ENCODE measurements at regions of chr11 and their contacts with region 1.

Region 1: DNA sequence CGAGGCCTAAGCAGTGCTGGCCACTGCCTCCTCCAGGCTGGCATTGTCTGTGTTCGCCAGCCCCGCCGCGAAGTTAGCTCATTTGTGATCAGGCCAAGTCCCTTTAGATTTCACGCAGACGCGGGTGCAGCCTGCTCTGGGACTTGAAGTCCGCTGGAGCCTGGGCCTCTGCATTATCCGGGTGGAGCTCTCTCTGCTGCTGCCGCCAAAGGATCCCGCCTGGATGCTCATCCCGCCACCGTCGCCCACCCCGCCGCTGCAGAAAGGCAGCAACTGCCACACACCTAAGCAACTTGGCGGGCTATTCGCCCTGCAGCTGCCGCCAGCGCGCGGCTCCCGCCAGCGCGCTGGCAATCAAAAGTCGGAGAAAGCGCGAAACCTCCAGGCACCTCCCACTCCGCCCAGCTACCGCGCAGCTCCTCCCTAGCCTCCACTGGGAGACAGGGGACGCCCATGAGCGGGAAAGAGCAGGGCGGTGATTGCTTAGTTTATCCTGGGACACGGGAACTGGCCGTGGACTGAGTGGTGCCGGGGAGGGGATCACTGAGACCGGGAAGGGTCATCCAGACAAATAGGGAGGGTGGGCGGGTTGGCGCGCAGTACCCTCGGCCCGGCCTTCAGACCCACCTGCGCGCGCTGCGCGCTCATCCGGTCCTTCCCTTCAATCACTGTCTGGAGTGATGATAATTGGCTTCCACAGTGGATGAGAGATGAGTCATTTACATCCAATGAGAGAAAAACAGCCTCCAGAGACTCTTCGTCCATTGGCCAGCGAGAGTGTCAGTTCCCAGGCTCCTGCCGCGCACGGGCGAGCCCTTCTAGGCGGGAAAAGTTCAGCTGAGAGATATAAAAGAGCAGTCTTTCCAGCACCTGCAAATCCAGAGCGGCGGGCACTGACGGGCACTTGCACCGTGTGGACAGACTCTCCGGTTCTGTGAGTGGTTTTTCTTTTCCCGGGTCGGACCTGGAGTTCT is at the start of gene FAM111B:
- DNase-seq: peak; percentile 84
- ATAC-seq: peak; percentile 85
- H3K4me3 ChIP-seq: peak within 1 kb of the TSS; percentile 79
- H3K27ac ChIP-seq: peak within 1 kb of the TSS; percentile 89
- H3K4me1 ChIP-seq: peaks cover 7% of the 10 kb centered on the region
- H3K27me3 ChIP-seq: no peaks in the 10 kb centered on the region
- CTCF ChIP-seq: no peak
- EP300 ChIP-seq: no peak
- POLR2A ChIP-seq: peak; percentile 79
- RAD21 ChIP-seq: no peak
- polyA plus RNA-seq, gene FAM111B: 42.0 to 65.3 TPM

Region 2: DNA sequence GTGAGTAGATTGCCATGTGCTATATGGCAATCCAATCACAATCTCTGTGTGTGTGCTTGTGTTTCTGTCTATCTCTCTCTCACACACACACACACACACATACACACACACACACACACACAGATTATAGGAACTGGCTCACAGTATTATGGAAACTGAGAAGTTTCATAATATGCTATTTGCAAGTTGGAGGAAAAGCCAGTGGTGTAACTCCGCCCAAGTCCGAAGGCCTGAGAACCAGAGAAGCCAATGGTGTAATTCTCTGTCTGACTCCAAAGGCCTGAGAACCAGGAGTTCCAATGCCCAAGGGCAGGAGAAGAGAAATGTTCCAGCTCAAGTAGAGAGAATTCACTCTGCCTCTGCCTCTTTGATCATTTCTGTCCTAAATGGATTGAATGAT is 299.3 kb before region 1 on chr11:
- CTCF ChIA-PET with region 1: no interaction called
- POLR2A ChIA-PET with region 1: no interaction called
- RAD21 ChIA-PET with region 1: no interaction called
- SMC1A ChIA-PET with region 1: no interaction called
- in situ Hi-C with region 1: no loop called
- intact Hi-C with region 1: no loop called
- DNase-seq: no peak
- ATAC-seq: no peak
- H3K4me3 ChIP-seq: no peak overlapping the region
- H3K27ac ChIP-seq: no peak overlapping the region
- H3K4me1 ChIP-seq: no peaks in the 10 kb centered on the region
- H3K27me3 ChIP-seq: no peaks in the 10 kb centered on the region
- CTCF ChIP-seq: no peak
- EP300 ChIP-seq: no peak
- POLR2A ChIP-seq: no peak
- RAD21 ChIP-seq: no peak

Region 3: DNA sequence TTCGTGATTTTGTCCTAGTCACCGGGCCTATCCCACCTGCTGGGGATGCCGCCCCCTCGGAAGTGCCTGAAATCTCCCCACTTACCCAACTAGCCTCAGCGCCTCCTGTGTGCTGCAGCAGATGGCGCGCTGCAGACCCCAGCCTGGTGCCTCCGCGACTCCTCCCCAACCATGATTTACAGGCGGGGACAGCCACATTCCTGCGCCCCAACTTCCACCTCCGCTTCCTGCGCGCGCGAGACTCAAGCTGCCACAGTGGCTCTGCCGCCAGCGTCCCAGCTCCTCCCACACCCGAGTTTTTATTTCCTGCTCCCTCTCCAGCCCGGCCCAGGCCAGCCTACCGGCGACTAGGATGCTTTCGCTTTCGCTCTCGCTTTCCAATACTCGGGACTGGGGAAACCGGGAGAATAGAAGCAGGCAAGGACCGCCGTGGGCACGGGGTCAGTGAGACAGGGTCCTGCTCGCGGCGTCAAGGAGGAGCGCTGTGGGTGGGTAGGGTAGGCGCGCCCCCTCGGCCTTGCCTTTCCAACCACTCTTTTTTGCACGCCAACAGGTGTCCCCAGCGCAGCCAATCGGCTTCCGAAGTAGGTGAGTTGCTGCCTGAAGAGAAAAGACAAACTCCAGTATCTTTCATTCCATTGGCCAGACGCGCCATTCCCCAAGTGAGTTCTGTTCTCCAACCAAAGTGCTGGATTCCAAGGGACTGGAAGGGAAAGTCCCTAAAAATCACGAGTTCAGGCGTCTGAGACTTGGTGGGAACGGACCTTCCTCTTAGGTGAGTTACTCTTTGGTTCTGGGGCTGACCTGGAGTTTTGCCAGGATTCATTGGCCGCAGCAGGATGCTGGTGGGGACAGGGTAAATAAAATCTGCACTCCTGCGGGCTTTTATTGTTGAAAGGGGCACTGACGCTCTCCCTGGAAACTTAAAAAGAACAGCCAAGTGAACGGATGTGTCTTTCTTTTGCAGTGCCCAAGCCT is 36.2 kb after region 1 on chr11 and contains the start of gene FAM111A:
- CTCF ChIA-PET with region 1: interaction called, 18 read pairs
- POLR2A ChIA-PET with region 1: interaction called, 20 read pairs
- RAD21 ChIA-PET with region 1: interaction called, 7 read pairs
- SMC1A ChIA-PET with region 1: interaction called, 26 read pairs
- in situ Hi-C with region 1: loop called (anchors 5 kb)
- intact Hi-C with region 1: loop called (anchors 1 kb)
- DNase-seq: peak; percentile 69
- ATAC-seq: peak; percentile 85
- H3K4me3 ChIP-seq: peak within 1 kb of the TSS; percentile 83
- H3K27ac ChIP-seq: peak within 1 kb of the TSS; percentile 91
- H3K4me1 ChIP-seq: peaks cover 21% of the 10 kb centered on the region; the same call in 1 of the 2 replicates
- H3K27me3 ChIP-seq: no peaks in the 10 kb centered on the region
- CTCF ChIP-seq: peak; percentile 39 to 54 (median 39)
- EP300 ChIP-seq: no peak
- POLR2A ChIP-seq: peak; percentile 73; the same call in 1 of the 2 replicates
- RAD21 ChIP-seq: peak; percentile 44; the same call in 1 of the 2 replicates
- polyA plus RNA-seq, gene FAM111A: 26.6 to 41.6 TPM

Region 4: DNA sequence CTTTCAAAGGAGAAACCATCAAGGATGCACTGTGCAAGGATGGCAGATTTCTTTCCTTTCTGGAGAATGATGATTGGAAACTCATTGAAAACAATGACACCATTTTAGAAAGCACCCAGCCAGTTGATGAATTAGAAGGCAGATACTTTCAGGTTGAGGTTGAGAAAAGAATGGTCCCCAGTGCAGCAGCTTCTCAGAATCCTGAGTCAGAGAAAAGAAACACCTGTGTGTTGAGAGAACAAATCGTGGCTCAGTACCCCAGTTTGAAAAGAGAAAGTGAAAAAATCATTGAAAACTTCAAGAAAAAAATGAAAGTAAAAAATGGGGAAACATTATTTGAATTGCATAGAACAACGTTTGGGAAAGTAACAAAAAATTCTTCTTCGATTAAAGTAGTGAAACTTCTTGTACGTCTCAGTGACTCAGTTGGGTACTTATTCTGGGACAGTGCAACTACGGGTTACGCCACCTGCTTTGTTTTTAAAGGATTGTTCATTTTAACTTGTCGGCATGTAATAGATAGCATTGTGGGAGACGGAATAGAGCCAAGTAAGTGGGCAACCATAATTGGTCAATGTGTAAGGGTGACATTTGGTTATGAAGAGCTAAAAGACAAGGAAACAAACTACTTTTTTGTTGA is 45.8 kb after region 1 on chr11:
- CTCF ChIA-PET with region 1: interaction called, 34 read pairs
- POLR2A ChIA-PET with region 1: interaction called, 3 read pairs
- RAD21 ChIA-PET with region 1: interaction called, 3 read pairs
- SMC1A ChIA-PET with region 1: interaction called, 11 read pairs
- in situ Hi-C with region 1: no loop called
- intact Hi-C with region 1: no loop called
- DNase-seq: no peak
- ATAC-seq: peak; percentile 91
- H3K4me3 ChIP-seq: peak overlapping the region; percentile 44; the same call in 1 of the 2 replicates
- H3K27ac ChIP-seq: peak overlapping the region; percentile 83
- H3K4me1 ChIP-seq: peaks cover 28% of the 10 kb centered on the region
- H3K27me3 ChIP-seq: no peaks in the 10 kb centered on the region
- CTCF ChIP-seq: no peak
- EP300 ChIP-seq: peak in 1 of 2 experiments; percentile 68; a peak in 1 of 4 replicates
- POLR2A ChIP-seq: 0 out of 2 replicates have a peak, but pooled peaks have one; percentile 6
- RAD21 ChIP-seq: no peak

Region 5: GRCh38 chr11:59263225-59263894 is 156.7 kb after region 1 on chr11:
- CTCF ChIA-PET with region 1: no interaction called
- POLR2A ChIA-PET with region 1: no interaction called
- RAD21 ChIA-PET with region 1: no interaction called
- SMC1A ChIA-PET with region 1: no interaction called
- in situ Hi-C with region 1: no loop called
- intact Hi-C with region 1: no loop called
- DNase-seq: no peak
- ATAC-seq: peak; percentile 53
- H3K4me3 ChIP-seq: no peak overlapping the region
- H3K27ac ChIP-seq: no peak overlapping the region
- H3K4me1 ChIP-seq: peaks cover 30% of the 10 kb centered on the region
- H3K27me3 ChIP-seq: no peaks in the 10 kb centered on the region
- CTCF ChIP-seq: peak; percentile 56 to 71 (median 58)
- EP300 ChIP-seq: no peak
- POLR2A ChIP-seq: no peak
- RAD21 ChIP-seq: peak; percentile 82

Measured in GM12878 (cell line).